ENCODE measurements at regions of chrX and their contacts with region 1.

Region 1: GRCh38 chrX:150715184-150715583 is 22.0 kb downstream of the MTMR1 start:
- DNase-seq: no peak
- H3K4me3 ChIP-seq: no peak overlapping the region
- H3K27ac ChIP-seq: no peak overlapping the region
- H3K4me1 ChIP-seq: peaks cover 6% of the 10 kb centered on the region
- H3K27me3 ChIP-seq: no peaks in the 10 kb centered on the region
- CTCF ChIP-seq: no peak

Region 2: GRCh38 chrX:150587585-150588503 is 127.3 kb before region 1 on chrX:
- CTCF ChIA-PET with region 1: no interaction called
- POLR2A ChIA-PET with region 1: no interaction called
- intact Hi-C with region 1: loop called (anchors 5 kb)
- DNase-seq: peak in 1 of 2 experiments; percentile 44
- H3K4me3 ChIP-seq: no peak overlapping the region
- H3K27ac ChIP-seq: no peak overlapping the region
- H3K4me1 ChIP-seq: no peaks in the 10 kb centered on the region
- H3K27me3 ChIP-seq: no peaks in the 10 kb centered on the region
- CTCF ChIP-seq: peak; percentile 94

Region 3: DNA sequence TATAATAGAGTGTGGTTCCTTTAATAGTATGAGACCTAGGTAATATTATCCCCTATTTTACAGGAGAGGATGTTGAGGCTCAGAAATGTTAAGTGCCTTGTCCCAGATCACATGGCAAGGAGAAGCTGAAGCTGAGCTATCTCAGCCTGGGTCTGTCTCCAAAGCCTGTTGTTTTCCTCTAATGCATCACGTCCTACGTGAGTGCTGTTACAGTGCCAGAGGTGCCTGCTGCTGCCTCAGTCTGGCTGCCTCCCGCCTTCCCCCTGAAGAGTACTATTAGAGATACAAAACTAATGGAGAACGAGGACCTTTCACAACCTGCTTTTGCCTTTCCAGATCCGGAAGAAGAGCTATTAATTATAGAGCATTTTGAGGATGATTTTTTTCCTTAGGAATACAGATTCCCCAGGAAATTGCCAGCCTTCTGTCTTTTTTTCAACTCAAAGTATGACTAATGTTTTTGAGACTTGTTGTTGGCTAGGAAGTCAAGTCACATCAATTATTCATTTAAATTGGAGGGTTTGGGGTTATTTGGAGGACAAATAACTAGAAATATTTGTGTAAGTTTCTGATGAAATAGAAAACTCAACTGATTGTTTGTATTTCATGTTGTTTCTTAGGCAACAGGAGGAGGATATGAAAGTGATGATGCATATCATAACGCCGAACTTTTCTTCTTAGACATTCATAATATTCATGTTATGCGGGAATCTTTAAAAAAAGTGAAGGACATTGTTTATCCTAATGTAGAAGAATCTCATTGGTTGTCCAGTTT is 65.9 kb before region 1 on chrX:
- CTCF ChIA-PET with region 1: interaction called, 4 read pairs
- POLR2A ChIA-PET with region 1: no interaction called
- intact Hi-C with region 1: loop called (anchors 10 kb)
- DNase-seq: no peak
- H3K4me3 ChIP-seq: no peak overlapping the region
- H3K27ac ChIP-seq: no peak overlapping the region
- H3K4me1 ChIP-seq: no peaks in the 10 kb centered on the region
- H3K27me3 ChIP-seq: no peaks in the 10 kb centered on the region
- CTCF ChIP-seq: no peak

Region 4: DNA sequence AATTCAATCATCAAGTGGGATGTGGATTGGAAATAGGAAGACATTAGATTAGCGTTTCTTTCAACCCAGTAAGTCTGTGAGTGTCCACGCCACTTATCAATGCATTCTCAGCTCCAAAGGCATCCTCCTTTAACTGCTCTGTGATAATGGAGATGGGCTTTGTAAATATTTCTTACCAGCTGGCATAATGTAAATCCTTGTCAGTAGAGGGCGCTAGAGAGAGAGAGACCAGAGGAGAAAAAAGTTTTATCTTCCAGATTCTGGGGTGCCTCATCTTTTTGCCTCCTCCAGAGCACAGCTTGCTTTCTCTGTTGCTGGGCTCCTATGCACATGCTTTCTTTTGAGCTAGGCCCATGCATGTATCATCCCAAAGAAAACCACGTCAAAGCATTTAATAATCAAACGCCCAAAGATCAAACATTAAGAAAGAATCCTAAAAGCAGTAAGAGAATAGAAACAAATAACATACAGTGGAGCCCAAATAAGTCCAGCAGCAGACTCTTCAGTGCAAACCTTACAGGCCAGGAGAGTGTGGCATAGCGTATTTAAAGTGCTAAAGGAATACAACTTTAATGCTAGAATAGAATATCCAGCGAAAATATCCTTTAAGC is 31.5 kb before region 1 on chrX:
- CTCF ChIA-PET with region 1: interaction called, 5 read pairs
- POLR2A ChIA-PET with region 1: no interaction called
- intact Hi-C with region 1: loop called (anchors 1 kb)
- DNase-seq: peak; percentile 21 to 51
- H3K4me3 ChIP-seq: no peak overlapping the region
- H3K27ac ChIP-seq: no peak overlapping the region
- H3K4me1 ChIP-seq: peaks cover 17% of the 10 kb centered on the region
- H3K27me3 ChIP-seq: no peaks in the 10 kb centered on the region
- CTCF ChIP-seq: peak; percentile 95